ENCODE measurements at regions of chr15 and their contacts with region 1.

Region 1: DNA sequence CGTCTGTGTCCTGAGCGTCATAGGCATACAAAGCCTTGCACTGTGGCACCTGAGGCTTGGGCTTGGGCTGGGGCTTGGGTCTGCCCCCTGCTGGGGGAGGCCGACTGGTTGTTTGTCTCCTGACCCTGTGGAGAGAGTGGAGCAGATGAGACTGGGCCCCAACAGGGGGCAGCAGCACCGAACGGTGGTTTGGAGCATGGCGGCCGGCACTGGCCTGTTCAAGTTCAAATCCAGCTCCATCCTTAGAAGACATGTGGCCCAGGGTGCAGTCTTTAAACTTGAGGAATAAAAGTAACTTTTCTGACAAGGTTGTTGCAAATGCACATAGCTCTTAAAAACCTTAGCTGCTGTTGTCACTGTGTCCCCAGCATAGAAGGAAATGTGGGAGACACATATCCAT is 33.3 kb downstream of the CCNB2 start:
- DNase-seq: no peak
- H3K4me3 ChIP-seq: no peak overlapping the region
- H3K27ac ChIP-seq: no peak overlapping the region
- H3K4me1 ChIP-seq: peaks cover 10% of the 10 kb centered on the region
- H3K27me3 ChIP-seq: no peaks in the 10 kb centered on the region
- CTCF ChIP-seq: peak; percentile 52 to 58

Region 2: GRCh38 chr15:58987489-58988005 is 150.7 kb before region 1 on chr15 and contains the start of gene RNF111:
- CTCF ChIA-PET with region 1: no interaction called
- dilution Hi-C with region 1: no loop called
- in situ Hi-C with region 1: no loop called
- intact Hi-C with region 1: loop called (anchors 10 kb)
- DNase-seq: peak; percentile 95
- H3K4me3 ChIP-seq: peak within 1 kb of the TSS; percentile 67 to 95 (median 89)
- H3K27ac ChIP-seq: peak within 1 kb of the TSS; percentile 75
- H3K4me1 ChIP-seq: peaks cover 11% of the 10 kb centered on the region
- H3K27me3 ChIP-seq: no peaks in the 10 kb centered on the region
- CTCF ChIP-seq: no peak
- total RNA-seq, gene RNF111: 22.0 to 30.7 TPM